CD8-positive, alpha-beta T cell (primary cell): ENCODE measurements at regions of chr15 and their contacts with region 1.

Region 1: GRCh38 chr15:58650102-58650501 is 99.4 kb downstream of the ADAM10 start:
- DNase-seq: peak in 1 of 9 experiments; percentile 39
- ATAC-seq: no peak
- H3K4me3 ChIP-seq: no peak overlapping the region
- H3K4me3 Mint-ChIP-seq: no peak overlapping the region
- H3K27ac ChIP-seq: no peak overlapping the region
- H3K27ac Mint-ChIP-seq: peak overlapping the region; percentile 1
- H3K4me1 ChIP-seq: no peaks in the 10 kb centered on the region
- H3K4me1 Mint-ChIP-seq: peaks cover 7% of the 10 kb centered on the region
- H3K27me3 ChIP-seq: no peaks in the 10 kb centered on the region
- H3K27me3 Mint-ChIP-seq: no peaks in the 10 kb centered on the region
- CTCF ChIP-seq: no peak

Region 2: GRCh38 chr15:58669108-58669507 is 19.0 kb after region 1 on chr15:
- CTCF ChIA-PET with region 1: no interaction called
- POLR2A ChIA-PET with region 1: no interaction called
- intact Hi-C with region 1: loop called in 1 of 2 experiments (anchors 2 kb)
- DNase-seq: no peak
- ATAC-seq: no peak
- H3K4me3 ChIP-seq: no peak overlapping the region
- H3K4me3 Mint-ChIP-seq: no peak overlapping the region
- H3K27ac ChIP-seq: no peak overlapping the region
- H3K27ac Mint-ChIP-seq: no peak overlapping the region
- H3K4me1 ChIP-seq: no peaks in the 10 kb centered on the region
- H3K4me1 Mint-ChIP-seq: peaks cover 6% of the 10 kb centered on the region
- H3K27me3 ChIP-seq: no peaks in the 10 kb centered on the region
- H3K27me3 Mint-ChIP-seq: no peaks in the 10 kb centered on the region
- CTCF ChIP-seq: no peak

Region 3: GRCh38 chr15:59862191-59863155 is 1212.4 kb after region 1 on chr15:
- CTCF ChIA-PET with region 1: no interaction called
- POLR2A ChIA-PET with region 1: no interaction called
- intact Hi-C with region 1: no loop called
- DNase-seq: no peak
- ATAC-seq: no peak
- H3K4me3 ChIP-seq: no peak overlapping the region
- H3K4me3 Mint-ChIP-seq: no peak overlapping the region
- H3K27ac ChIP-seq: no peak overlapping the region
- H3K27ac Mint-ChIP-seq: no peak overlapping the region
- H3K4me1 ChIP-seq: no peaks in the 10 kb centered on the region
- H3K4me1 Mint-ChIP-seq: no peaks in the 10 kb centered on the region
- H3K27me3 ChIP-seq: peaks cover 0 to 3% of the 10 kb centered on the region in 2 experiments
- H3K27me3 Mint-ChIP-seq: peaks cover 8% of the 10 kb centered on the region
- CTCF ChIP-seq: no peak